MCF 10A (cell line): ENCODE measurements at regions of chrX and their contacts with region 1.

Region 1: DNA sequence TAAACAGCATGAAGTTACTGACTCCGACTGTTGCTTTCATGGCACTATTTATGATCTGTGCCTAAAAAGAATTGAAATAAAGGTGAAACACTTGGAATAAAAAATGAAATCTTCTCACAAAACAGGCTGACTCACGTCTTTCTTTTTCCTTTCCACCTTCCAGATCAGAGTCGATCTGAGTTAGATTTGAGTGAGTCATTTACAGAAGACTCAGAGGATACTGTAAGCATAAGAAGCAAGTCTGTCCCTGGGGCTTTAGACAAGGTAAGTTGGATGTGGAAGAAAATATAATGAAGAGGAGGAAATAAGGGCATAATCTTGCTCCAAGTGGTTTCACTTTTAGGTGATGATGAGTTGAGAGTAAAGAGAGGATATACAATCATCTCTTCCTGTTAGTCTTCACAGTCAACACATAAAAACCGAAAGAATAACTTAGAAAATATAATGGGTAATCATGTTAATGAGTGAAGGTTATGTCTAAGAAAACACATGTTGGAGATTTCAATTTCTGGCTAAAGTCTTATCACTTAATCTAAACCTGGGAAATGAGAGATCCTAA is 89.7 kb downstream of the SYTL5 start:
- DNase-seq: peak; percentile 43
- H3K4me3 Mint-ChIP-seq: peak overlapping the region; percentile 11
- H3K27ac Mint-ChIP-seq: no peak overlapping the region
- H3K4me1 Mint-ChIP-seq: peaks cover 6% of the 10 kb centered on the region
- H3K27me3 Mint-ChIP-seq: peaks cover 24% of the 10 kb centered on the region
- CTCF ChIP-seq: no peak

Region 2: DNA sequence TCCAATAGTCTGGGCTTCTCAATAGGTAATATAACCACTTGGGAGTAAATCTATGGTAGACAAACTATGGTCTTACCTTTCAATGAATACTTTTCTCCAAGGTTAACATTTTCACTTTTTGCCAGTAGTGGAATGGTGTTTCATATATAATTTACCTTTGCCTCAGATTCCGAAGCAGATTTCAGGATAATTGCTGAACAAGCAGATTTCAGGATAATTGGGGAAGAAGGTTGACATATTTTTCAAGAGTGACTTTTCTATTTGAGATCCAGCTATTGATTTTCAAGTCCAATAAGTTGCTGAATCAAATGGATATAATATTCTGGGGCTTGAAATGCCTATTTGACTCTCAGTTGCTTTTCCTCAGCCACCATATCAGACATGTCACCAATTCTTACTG is 26.1 kb before region 1 on chrX:
- CTCF ChIA-PET with region 1: no interaction called
- POLR2A ChIA-PET with region 1: no interaction called
- intact Hi-C with region 1: loop called (anchors 1 kb)
- DNase-seq: no peak
- H3K4me3 Mint-ChIP-seq: no peak overlapping the region
- H3K27ac Mint-ChIP-seq: no peak overlapping the region
- H3K4me1 Mint-ChIP-seq: no peaks in the 10 kb centered on the region
- H3K27me3 Mint-ChIP-seq: peaks cover 57% of the 10 kb centered on the region
- CTCF ChIP-seq: no peak